ENCODE measurements at regions of chr3 and their contacts with region 1.

Region 1: GRCh38 chr3:195755791-195756676 is 35.3 kb downstream of the MUC20 start:
- DNase-seq: peak; percentile 44
- H3K4me3 Mint-ChIP-seq: peak overlapping the region; percentile 1
- H3K27ac Mint-ChIP-seq: peak overlapping the region; percentile 32
- H3K4me1 Mint-ChIP-seq: peaks cover 20% of the 10 kb centered on the region
- H3K27me3 Mint-ChIP-seq: peaks cover 20% of the 10 kb centered on the region

Region 2: GRCh38 chr3:195806211-195806915 is 50.3 kb after region 1 on chr3:
- intact Hi-C with region 1: loop called (anchors 1 kb)
- DNase-seq: no peak
- H3K4me3 Mint-ChIP-seq: peak overlapping the region; percentile 53
- H3K27ac Mint-ChIP-seq: peak overlapping the region; percentile 88
- H3K4me1 Mint-ChIP-seq: peaks cover 49% of the 10 kb centered on the region
- H3K27me3 Mint-ChIP-seq: no peaks in the 10 kb centered on the region